ENCODE measurements at regions of chr9 and their contacts with region 1.

Region 1: DNA sequence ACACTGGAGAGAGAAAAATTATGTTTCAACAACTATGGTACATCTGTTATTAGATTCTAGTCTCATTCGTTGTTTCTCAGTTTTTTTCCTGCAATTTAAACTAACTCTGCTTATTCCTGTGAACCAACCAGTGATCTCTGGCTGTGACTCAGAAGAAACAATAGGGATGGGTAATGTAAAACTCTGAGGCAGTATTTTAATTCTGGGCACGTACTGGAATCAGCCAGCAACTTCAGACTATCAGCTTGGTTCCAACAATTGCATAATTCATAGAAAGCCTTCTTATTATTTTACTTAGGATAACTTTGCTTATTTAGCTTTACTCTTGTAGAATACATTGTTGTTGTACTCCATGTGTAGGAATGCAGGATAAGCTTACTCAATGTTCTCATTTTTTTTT is 28.7 kb downstream of the MLLT3 start:
- DNase-seq: no peak
- H3K4me3 ChIP-seq: no peak overlapping the region
- H3K27ac ChIP-seq: no peak overlapping the region
- H3K4me1 ChIP-seq: no peaks in the 10 kb centered on the region
- H3K27me3 ChIP-seq: no peaks in the 10 kb centered on the region
- CTCF ChIP-seq: no peak
- POLR2A ChIP-seq: no peak

Region 2: GRCh38 chr9:20479419-20480155 is 114.0 kb before region 1 on chr9:
- intact Hi-C with region 1: loop called (anchors 10 kb)
- DNase-seq: no peak
- H3K4me3 ChIP-seq: no peak overlapping the region
- H3K27ac ChIP-seq: no peak overlapping the region
- H3K4me1 ChIP-seq: no peaks in the 10 kb centered on the region
- H3K27me3 ChIP-seq: no peaks in the 10 kb centered on the region
- CTCF ChIP-seq: no peak
- POLR2A ChIP-seq: no peak

Region 3: GRCh38 chr9:21070171-21070571 is 476.6 kb after region 1 on chr9:
- intact Hi-C with region 1: no loop called
- DNase-seq: peak; percentile 33
- H3K4me3 ChIP-seq: no peak overlapping the region
- H3K27ac ChIP-seq: no peak overlapping the region
- H3K4me1 ChIP-seq: no peaks in the 10 kb centered on the region
- H3K27me3 ChIP-seq: no peaks in the 10 kb centered on the region
- CTCF ChIP-seq: peak in 1 of 4 experiments; percentile 20
- POLR2A ChIP-seq: no peak